Spleen (tissue), 13 donors: ENCODE measurements at regions of chr19 and their contacts with region 1.

Region 1: DNA sequence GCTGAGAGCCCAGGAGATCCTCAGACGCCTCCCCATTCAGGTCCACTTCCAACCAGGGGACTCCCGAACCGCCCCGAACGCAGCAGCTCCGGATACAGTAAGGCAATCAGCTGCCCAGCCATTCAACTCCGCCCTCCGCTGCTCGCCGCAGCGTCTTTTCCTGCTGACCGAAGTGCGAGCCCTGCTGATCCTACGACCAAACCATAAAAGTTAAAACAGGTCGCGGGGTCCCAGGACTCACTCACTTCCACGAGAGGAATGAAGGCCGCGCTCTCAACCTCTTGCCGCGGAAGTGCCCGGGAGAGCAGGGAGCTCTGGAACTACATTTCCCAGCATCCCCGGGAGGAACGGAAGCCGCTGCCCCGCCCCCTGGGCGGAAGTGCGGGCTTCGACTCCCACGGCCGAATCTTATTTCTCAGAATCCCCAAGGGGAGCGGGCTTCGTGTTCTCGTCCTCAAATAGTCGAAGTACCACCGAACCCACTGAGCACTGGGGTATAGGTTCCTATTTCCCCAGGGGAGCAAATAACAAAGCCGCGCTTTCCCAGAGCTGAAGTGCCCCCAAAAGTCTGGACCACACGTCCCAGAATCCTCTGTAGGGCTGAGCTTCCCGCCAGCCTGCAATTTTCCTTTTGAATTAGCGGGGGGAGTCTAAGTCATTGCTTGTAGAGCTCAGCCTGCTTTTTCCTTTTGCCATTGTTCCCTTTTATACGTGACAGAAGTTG is at the start of gene ZNF45:
- DNase-seq: peak; percentile 95
- H3K4me3 ChIP-seq: peak within 1 kb of the TSS; percentile 55 to 74 (median 67)
- H3K27ac ChIP-seq: peak within 1 kb of the TSS; percentile 57 to 90 (median 86)
- H3K4me1 ChIP-seq: peaks cover 6 to 35% (median 24%) of the 10 kb centered on the region in 6 donors
- H3K27me3 ChIP-seq: no peaks in the 10 kb centered on the region
- CTCF ChIP-seq: no peak
- POLR2A ChIP-seq: no peak
- total RNA-seq, gene ZNF45: 12.9 to 24.5 (median 16.2) TPM

Region 2: DNA sequence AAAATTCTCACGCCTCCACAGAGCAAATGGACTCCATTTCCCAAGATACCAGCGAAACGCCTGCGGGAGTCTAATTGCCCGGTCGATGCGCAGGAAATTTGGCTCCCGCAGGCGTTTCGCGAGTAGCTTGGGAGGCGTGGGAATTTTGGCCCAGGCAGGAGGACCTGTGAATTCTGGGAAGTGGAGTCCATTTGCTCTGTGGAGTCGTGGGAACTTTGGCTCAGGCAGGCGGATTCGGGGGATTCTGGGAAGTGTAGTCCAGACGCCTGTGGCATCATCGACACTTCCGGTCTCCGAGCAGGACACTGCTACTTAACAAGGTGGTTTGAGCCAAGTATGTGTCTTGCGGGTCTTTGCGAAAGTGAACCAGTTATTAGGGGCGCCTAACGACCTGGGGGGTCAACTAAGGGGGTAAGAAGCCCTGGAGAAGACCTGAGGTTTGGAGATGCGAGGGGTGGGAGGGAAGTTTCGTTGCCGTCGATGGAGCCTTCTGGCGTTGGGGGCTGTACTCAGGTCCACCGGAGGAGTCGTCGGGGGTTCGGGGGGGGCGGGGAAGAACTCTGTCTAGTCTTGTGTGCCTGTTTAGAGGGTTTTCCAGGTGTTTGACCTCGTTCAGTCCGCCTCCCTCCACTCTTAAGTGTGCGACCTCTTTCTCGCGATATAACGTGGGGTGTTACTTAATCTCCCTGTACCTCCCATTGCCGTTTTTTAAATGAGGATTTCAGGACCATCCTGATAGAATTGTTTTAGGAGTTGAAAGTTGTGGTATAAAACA is 49.0 kb after region 1 on chr19 and contains the start of gene ZNF155:
- intact Hi-C with region 1: loop called (anchors 10 kb)
- DNase-seq: peak; percentile 91
- H3K4me3 ChIP-seq: peak within 1 kb of the TSS; percentile 57 to 87 (median 68)
- H3K27ac ChIP-seq: peak within 1 kb of the TSS in 7 of 8 donors; percentile 56 to 88 (median 86)
- H3K4me1 ChIP-seq: peaks cover 6 to 26% (median 21%) of the 10 kb centered on the region in 6 donors
- H3K27me3 ChIP-seq: no peaks in the 10 kb centered on the region
- CTCF ChIP-seq: no peak
- POLR2A ChIP-seq: no peak
- total RNA-seq, gene ZNF155: 9.7 to 18.2 (median 11.8) TPM

Region 3: GRCh38 chr19:44042147-44042546 is 107.0 kb after region 1 on chr19:
- intact Hi-C with region 1: no loop called
- DNase-seq: no peak
- H3K4me3 ChIP-seq: no peak overlapping the region
- H3K27ac ChIP-seq: no peak overlapping the region
- H3K4me1 ChIP-seq: no peaks in the 10 kb centered on the region
- H3K27me3 ChIP-seq: peaks cover 0 to 13% (median 0%) of the 10 kb centered on the region in 7 donors
- CTCF ChIP-seq: no peak
- POLR2A ChIP-seq: no peak